Naive thymus-derived CD4-positive, alpha-beta T cell (primary cell): ENCODE measurements at regions of chr6 and their contacts with region 1.

Region 1: GRCh38 chr6:107957909-107958688 is at the start of gene SEC63:
- DNase-seq: peak; percentile 92 to 97 (median 96)
- ATAC-seq: peak; percentile 100
- H3K4me3 ChIP-seq: peak within 1 kb of the TSS; percentile 96
- H3K4me3 Mint-ChIP-seq: peak within 1 kb of the TSS; percentile 94 to 100 (median 99)
- H3K27ac ChIP-seq: peak within 1 kb of the TSS; percentile 86
- H3K27ac Mint-ChIP-seq: peak within 1 kb of the TSS; percentile 80 to 98 (median 96)
- H3K4me1 ChIP-seq: peaks cover 15 to 17% of the 10 kb centered on the region in 2 donors
- H3K4me1 Mint-ChIP-seq: peaks cover 20 to 35% (median 29%) of the 10 kb centered on the region in 7 donors
- H3K27me3 ChIP-seq: no peaks in the 10 kb centered on the region
- H3K27me3 Mint-ChIP-seq: peaks cover 0 to 5% (median 0%) of the 10 kb centered on the region in 5 donors
- total RNA-seq, gene SEC63: 82.9 to 89.0 (median 86.0) TPM

Region 2: DNA sequence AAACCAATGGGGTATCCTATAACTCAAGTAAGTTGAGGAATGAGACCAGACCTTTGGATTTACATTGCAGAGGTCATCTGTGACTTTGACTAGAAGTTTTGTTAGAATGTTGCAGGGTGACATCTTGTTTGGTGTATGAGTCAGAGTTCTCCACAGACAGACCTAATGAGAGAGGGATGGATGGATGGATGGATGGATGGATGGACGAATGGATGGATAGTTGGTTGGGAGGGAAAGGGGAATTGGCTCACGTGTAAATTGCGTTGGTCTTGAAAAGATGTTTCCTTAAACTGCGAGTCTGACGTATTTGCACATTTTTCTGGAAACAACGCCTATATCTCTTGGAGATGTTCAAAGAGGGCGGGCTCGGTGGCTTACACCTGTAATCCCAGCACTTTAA is 931.1 kb before region 1 on chr6:
- CTCF ChIA-PET with region 1: no interaction called
- POLR2A ChIA-PET with region 1: no interaction called
- intact Hi-C with region 1: loop called (anchors 1 to 5 kb)
- DNase-seq: no peak
- ATAC-seq: no peak
- H3K4me3 ChIP-seq: no peak overlapping the region
- H3K4me3 Mint-ChIP-seq: peak overlapping the region; percentile 4 to 99 (median 94)
- H3K27ac ChIP-seq: no peak overlapping the region
- H3K27ac Mint-ChIP-seq: peak overlapping the region in 5 of 9 donors; percentile 32 to 92 (median 63)
- H3K4me1 ChIP-seq: peaks cover 3 to 14% of the 10 kb centered on the region in 2 donors
- H3K4me1 Mint-ChIP-seq: peaks cover 20 to 35% (median 29%) of the 10 kb centered on the region in 7 donors
- H3K27me3 ChIP-seq: no peaks in the 10 kb centered on the region
- H3K27me3 Mint-ChIP-seq: no peaks in the 10 kb centered on the region

Region 3: GRCh38 chr6:107716688-107717089 is 241.4 kb before region 1 on chr6:
- CTCF ChIA-PET with region 1: no interaction called
- POLR2A ChIA-PET with region 1: no interaction called
- intact Hi-C with region 1: loop called (anchors 2 kb)
- DNase-seq: peak; percentile 27 to 89 (median 85)
- ATAC-seq: peak; percentile 95
- H3K4me3 ChIP-seq: no peak overlapping the region
- H3K4me3 Mint-ChIP-seq: peak overlapping the region; percentile 43 to 81 (median 72)
- H3K27ac ChIP-seq: peak overlapping the region; percentile 49
- H3K27ac Mint-ChIP-seq: peak overlapping the region; percentile 82 to 97 (median 92)
- H3K4me1 ChIP-seq: peaks cover 47 to 57% of the 10 kb centered on the region in 2 donors
- H3K4me1 Mint-ChIP-seq: peaks cover 46 to 86% (median 74%) of the 10 kb centered on the region in 7 donors
- H3K27me3 ChIP-seq: no peaks in the 10 kb centered on the region
- H3K27me3 Mint-ChIP-seq: no peaks in the 10 kb centered on the region

Region 4: GRCh38 chr6:107879941-107880657 is 78.0 kb before region 1 on chr6:
- CTCF ChIA-PET with region 1: no interaction called
- POLR2A ChIA-PET with region 1: no interaction called
- intact Hi-C with region 1: loop called in 1 of 2 experiments (anchors 5 kb)
- DNase-seq: no peak
- ATAC-seq: no peak
- H3K4me3 ChIP-seq: no peak overlapping the region
- H3K4me3 Mint-ChIP-seq: no peak overlapping the region
- H3K27ac ChIP-seq: no peak overlapping the region
- H3K27ac Mint-ChIP-seq: peak overlapping the region in 2 of 9 donors; percentile 14 to 42
- H3K4me1 ChIP-seq: no peaks in the 10 kb centered on the region
- H3K4me1 Mint-ChIP-seq: peaks cover 0 to 1% (median 0%) of the 10 kb centered on the region in 7 donors
- H3K27me3 ChIP-seq: no peaks in the 10 kb centered on the region
- H3K27me3 Mint-ChIP-seq: no peaks in the 10 kb centered on the region

Region 5: DNA sequence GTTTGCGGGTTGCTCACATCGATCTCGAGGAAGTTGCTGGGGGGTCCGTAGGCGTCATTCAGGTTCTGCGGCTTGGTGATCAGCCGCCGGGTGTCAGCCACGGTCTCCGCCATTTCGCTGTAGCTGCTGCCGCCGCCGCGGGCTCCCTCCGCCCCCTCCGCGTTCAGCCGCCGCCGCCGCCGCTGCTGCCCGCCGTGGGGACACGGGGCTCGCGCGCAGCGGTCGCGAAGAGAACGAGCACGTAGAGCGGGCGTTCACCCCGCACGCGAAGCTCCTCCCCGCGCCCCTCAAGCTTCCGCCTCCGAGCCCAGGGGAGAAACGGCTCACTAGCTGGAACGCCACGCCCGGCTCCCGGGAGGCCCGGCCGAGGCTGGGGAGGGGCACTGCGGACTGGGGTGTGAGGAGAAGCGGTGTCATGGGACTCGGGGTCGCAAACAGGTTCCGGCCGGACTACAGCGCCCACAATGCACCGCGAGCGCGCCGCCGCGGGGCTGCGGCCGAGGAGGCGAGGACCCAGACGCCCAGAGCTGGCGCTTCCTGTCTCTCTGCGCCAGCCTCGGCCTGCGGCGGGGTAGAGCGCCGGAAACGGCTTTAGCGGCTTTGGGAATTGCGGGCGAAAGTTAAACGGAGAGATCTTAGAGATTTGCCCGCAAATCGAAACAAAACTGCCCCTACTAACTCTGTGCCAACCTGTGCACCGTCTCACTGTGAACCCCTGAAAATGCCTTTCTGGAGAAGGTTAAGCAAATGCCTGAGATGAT is 302.9 kb after region 1 on chr6 and contains the start of gene SNX3:
- CTCF ChIA-PET with region 1: no interaction called
- POLR2A ChIA-PET with region 1: interaction called, 5 read pairs
- intact Hi-C with region 1: loop called (anchors 1 kb)
- DNase-seq: peak; percentile 81 to 92 (median 91)
- ATAC-seq: peak; percentile 92
- H3K4me3 ChIP-seq: peak within 1 kb of the TSS; percentile 76
- H3K4me3 Mint-ChIP-seq: peak within 1 kb of the TSS; percentile 78 to 97 (median 91)
- H3K27ac ChIP-seq: peak within 1 kb of the TSS; percentile 96
- H3K27ac Mint-ChIP-seq: peak within 1 kb of the TSS; percentile 85 to 98 (median 96)
- H3K4me1 ChIP-seq: peaks cover 0 to 8% of the 10 kb centered on the region in 2 donors
- H3K4me1 Mint-ChIP-seq: peaks cover 16 to 40% (median 26%) of the 10 kb centered on the region in 7 donors
- H3K27me3 ChIP-seq: no peaks in the 10 kb centered on the region
- H3K27me3 Mint-ChIP-seq: peaks cover 0 to 14% (median 0%) of the 10 kb centered on the region in 5 donors
- total RNA-seq, gene SNX3: 42.5 to 87.4 (median 65.8) TPM

Region 6: GRCh38 chr6:109009236-109009961 is 1051.3 kb after region 1 on chr6:
- CTCF ChIA-PET with region 1: no interaction called
- POLR2A ChIA-PET with region 1: no interaction called
- intact Hi-C with region 1: loop called in 1 of 2 experiments (anchors 1 kb)
- DNase-seq: peak; percentile 85 to 91 (median 90)
- ATAC-seq: peak; percentile 98
- H3K4me3 ChIP-seq: peak overlapping the region; percentile 84
- H3K4me3 Mint-ChIP-seq: peak overlapping the region; percentile 91 to 99 (median 96)
- H3K27ac ChIP-seq: peak overlapping the region; percentile 99
- H3K27ac Mint-ChIP-seq: peak overlapping the region; percentile 94 to 100 (median 98)
- H3K4me1 ChIP-seq: peaks cover 22 to 40% of the 10 kb centered on the region in 2 donors
- H3K4me1 Mint-ChIP-seq: peaks cover 26 to 81% (median 72%) of the 10 kb centered on the region in 7 donors
- H3K27me3 ChIP-seq: no peaks in the 10 kb centered on the region
- H3K27me3 Mint-ChIP-seq: peaks cover 0 to 3% (median 0%) of the 10 kb centered on the region in 5 donors